Activated CD4-positive, alpha-beta memory T cell treated with anti-CD3 and anti-CD28 coated beads for 36 hours (primary cell): ENCODE measurements at regions of chr18 and their contacts with region 1.

Region 1: DNA sequence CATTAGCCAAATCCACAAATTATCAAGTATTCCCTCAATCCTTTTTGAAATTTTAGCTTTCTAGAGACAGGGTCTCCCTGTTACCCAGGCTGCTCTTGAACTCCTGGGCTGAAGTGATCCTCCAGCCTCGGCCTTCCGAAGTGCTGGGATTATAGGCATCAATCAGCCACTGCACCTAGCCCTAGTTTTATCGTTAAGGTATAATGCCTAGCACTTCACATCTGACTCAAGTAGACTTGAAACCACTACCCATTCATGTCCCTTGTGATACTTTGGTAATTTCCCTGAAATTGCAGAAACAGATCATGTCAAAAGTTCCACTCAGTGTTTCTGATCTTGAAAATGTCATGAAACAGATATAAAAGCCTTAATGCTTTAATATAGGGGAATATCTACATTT is 26.3 kb downstream of the MEX3C start:
- DNase-seq: no peak
- H3K4me3 Mint-ChIP-seq: peak overlapping the region; percentile 26
- H3K27ac Mint-ChIP-seq: peak overlapping the region; percentile 97
- H3K4me1 Mint-ChIP-seq: peaks cover 63% of the 10 kb centered on the region
- H3K27me3 Mint-ChIP-seq: no peaks in the 10 kb centered on the region

Region 2: DNA sequence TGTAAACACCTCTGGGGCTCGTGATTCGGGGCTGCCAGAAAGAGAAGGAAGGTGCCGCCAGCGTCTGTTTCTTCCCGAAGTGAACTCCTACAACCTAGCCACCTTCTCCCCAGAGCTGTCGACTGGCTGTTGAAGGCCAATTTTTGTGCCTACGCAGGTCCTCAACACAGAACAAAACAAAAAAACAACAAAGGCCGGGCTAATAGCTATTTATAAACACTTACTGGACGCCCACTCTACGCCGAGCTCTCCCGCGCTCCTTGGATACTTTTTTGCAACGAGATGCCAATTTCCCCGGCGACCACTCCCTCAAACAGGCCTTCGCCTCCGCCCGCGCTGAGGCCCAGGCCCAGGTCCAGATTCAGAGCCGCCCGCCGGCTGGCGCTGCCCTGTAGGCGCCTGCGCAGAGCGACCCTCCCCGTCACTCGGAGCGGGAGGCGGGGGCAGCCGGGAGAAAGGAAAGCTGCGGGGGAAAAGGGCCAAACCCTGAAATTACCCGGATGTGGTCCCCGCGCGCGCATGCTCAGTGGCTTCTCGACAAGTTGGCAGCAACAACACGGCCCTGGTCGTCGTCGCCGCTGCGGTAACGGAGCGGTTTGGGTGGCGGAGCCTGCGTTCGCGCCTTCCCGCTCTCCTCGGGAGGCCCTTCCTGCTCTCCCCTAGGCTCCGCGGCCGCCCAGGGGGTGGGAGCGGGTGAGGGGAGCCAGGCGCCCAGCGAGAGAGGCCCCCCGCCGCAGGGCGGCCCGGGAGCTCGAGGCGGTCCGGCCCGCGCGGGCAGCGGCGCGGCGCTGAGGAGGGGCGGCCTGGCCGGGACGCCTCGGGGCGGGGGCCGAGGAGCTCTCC is 141.3 kb before region 1 on chr18 and contains the start of gene SMAD4:
- CTCF ChIA-PET with region 1: no interaction called
- POLR2A ChIA-PET with region 1: interaction called, 3 read pairs
- intact Hi-C with region 1: loop called (anchors 5 kb)
- DNase-seq: peak; percentile 99
- H3K4me3 Mint-ChIP-seq: peak within 1 kb of the TSS; percentile 99
- H3K27ac Mint-ChIP-seq: peak within 1 kb of the TSS; percentile 91
- H3K4me1 Mint-ChIP-seq: peaks cover 58% of the 10 kb centered on the region
- H3K27me3 Mint-ChIP-seq: no peaks in the 10 kb centered on the region
- total RNA-seq, gene SMAD4: 72.5 to 72.7 TPM

Region 3: GRCh38 chr18:51153659-51154371 is 17.4 kb before region 1 on chr18:
- CTCF ChIA-PET with region 1: interaction called, 5 read pairs
- POLR2A ChIA-PET with region 1: interaction called, 9 read pairs
- intact Hi-C with region 1: loop called (anchors 1 kb)
- DNase-seq: peak; percentile 70
- H3K4me3 Mint-ChIP-seq: peak overlapping the region; percentile 70
- H3K27ac Mint-ChIP-seq: peak overlapping the region; percentile 97
- H3K4me1 Mint-ChIP-seq: peaks cover 47% of the 10 kb centered on the region
- H3K27me3 Mint-ChIP-seq: no peaks in the 10 kb centered on the region

Region 4: DNA sequence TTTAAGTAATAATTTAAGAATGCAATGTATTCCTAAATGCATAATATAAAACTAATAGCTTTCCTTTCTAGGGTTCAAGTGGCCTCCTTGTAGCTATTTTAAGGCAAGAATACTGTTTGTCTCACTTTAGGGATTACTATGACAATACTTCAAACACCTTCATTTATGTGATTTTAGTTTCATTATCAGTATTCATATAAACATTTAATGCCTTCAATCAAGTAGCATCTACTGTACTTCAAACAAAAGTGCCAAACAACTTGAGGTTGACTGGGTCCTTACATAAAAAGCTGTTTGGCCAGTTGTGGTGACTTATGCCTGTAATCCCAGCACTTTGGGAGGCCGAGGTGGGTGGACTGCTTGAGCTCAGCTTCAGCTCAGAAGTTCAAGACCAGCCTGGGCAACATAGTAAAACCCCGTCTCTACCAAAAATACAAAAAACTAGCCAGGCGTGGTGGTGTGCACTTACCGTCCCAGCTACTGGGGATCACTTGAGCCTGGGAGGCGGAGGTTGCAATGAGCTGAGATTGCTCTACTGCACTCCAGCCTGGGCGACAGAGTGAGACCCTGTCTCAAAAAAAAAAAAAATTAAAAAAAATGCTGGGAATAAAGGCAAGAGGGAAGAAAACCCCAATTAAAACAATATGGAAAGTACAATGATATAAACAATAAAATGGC is 16.9 kb after region 1 on chr18:
- CTCF ChIA-PET with region 1: interaction called, 3 read pairs
- POLR2A ChIA-PET with region 1: interaction called, 13 read pairs
- intact Hi-C with region 1: loop called (anchors 1 kb)
- DNase-seq: no peak
- H3K4me3 Mint-ChIP-seq: peak overlapping the region; percentile 35
- H3K27ac Mint-ChIP-seq: peak overlapping the region; percentile 58
- H3K4me1 Mint-ChIP-seq: peaks cover 78% of the 10 kb centered on the region
- H3K27me3 Mint-ChIP-seq: no peaks in the 10 kb centered on the region

Region 5: GRCh38 chr18:51235011-51235789 is 64.0 kb after region 1 on chr18:
- CTCF ChIA-PET with region 1: no interaction called
- POLR2A ChIA-PET with region 1: no interaction called
- intact Hi-C with region 1: loop called (anchors 1 kb)
- DNase-seq: peak; percentile 69
- H3K4me3 Mint-ChIP-seq: no peak overlapping the region
- H3K27ac Mint-ChIP-seq: peak overlapping the region; percentile 47
- H3K4me1 Mint-ChIP-seq: peaks cover 22% of the 10 kb centered on the region
- H3K27me3 Mint-ChIP-seq: peaks cover 8% of the 10 kb centered on the region